GM10248 (cell line): ENCODE measurements at regions of chr16 and their contacts with region 1.

Region 1: GRCh38 chr16:11797166-11797956 is at the start of gene ZC3H7A:
- DNase-seq: peak; percentile 96
- CTCF ChIP-seq: peak; percentile 91

Region 2: GRCh38 chr16:11742539-11743307 is 54.6 kb before region 1 on chr16 and contains the start of gene TXNDC11:
- CTCF ChIA-PET with region 1: interaction called, 35 read pairs
- POLR2A ChIA-PET with region 1: interaction called, 17 read pairs
- DNase-seq: peak; percentile 97
- CTCF ChIP-seq: no peak

Region 3: DNA sequence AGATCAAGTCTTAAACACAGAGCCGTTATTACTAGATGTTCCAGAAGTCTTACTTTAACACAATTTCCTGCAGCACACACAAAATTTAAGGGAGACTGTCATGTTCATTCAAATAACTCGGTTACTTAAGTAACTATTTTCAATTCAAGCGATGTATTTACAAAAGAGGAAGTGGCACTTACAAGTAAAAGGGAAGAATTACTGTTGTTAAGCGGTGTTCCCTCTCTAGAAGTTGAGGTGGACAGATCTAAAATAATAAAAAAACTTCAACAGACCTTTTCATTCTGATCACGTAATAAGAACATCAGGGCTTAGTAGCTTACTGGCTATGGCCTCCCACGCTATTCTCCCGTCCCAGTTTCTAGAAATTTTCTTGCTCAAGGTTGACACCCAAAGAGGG is 28.5 kb before region 1 on chr16:
- CTCF ChIA-PET with region 1: interaction called, 21 read pairs
- POLR2A ChIA-PET with region 1: interaction called, 4 read pairs
- DNase-seq: peak; percentile 29
- CTCF ChIP-seq: no peak

Region 4: GRCh38 chr16:11783319-11784037 is 13.9 kb before region 1 on chr16:
- CTCF ChIA-PET with region 1: interaction called, 48 read pairs
- POLR2A ChIA-PET with region 1: interaction called, 9 read pairs
- DNase-seq: peak; percentile 63
- CTCF ChIP-seq: no peak